Activated CD4-positive, alpha-beta memory T cell treated with anti-CD3 and anti-CD28 coated beads, Interleukin-2, amount 10 ng/mL, durations not matched to agents 7 days and 5 days (primary cell): ENCODE measurements at regions of chr14 and their contacts with region 1.

Region 1: DNA sequence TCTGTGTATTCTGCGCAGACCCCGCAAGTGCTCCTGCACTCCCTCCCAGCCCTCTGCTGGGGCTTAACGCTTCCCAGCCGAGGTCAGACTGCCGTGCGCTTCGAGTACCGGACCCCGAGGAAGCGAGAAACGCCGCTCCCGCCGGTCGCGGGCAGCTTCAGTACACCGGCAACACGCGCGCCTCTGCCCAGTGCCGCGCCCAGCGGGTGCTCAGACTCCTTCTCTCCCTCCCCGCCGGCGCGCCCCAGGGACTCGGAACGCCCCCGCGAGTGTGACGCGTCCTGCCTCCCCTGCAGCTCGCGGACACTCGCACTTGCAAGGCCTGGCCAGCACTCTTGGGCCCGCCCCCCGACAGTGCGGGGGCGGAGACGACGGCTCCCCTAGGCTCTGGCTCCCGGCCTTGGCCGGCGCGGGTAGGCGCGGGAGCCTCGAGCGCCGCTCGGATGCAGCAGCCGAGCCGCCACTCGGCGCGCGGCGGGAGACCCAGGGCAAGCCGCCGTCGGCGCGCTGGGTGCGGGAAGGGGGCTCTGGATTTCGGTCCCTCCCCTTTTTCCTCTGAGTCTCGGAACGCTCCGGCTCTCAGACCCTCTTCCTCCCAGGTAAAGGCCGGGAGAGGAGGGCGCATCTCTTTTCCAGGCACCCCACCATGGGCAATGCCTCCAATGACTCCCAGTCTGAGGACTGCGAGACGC is at the start of gene PTGER2:
- DNase-seq: peak; percentile 93
- H3K4me3 Mint-ChIP-seq: peak within 1 kb of the TSS; percentile 92
- H3K27ac Mint-ChIP-seq: peak within 1 kb of the TSS; percentile 97
- H3K4me1 Mint-ChIP-seq: peaks cover 63% of the 10 kb centered on the region
- H3K27me3 Mint-ChIP-seq: peaks cover 5% of the 10 kb centered on the region
- total RNA-seq, gene PTGER2: 108 to 112 TPM

Region 2: GRCh38 chr14:51860164-51860824 is 453.8 kb before region 1 on chr14 and contains the start of gene GNG2:
- CTCF ChIA-PET with region 1: no interaction called
- POLR2A ChIA-PET with region 1: interaction called, 17 read pairs
- DNase-seq: peak; percentile 90
- H3K4me3 Mint-ChIP-seq: peak within 1 kb of the TSS; percentile 84
- H3K27ac Mint-ChIP-seq: peak within 1 kb of the TSS; percentile 94
- H3K4me1 Mint-ChIP-seq: peaks cover 48% of the 10 kb centered on the region
- H3K27me3 Mint-ChIP-seq: no peaks in the 10 kb centered on the region
- total RNA-seq, gene GNG2: 296 to 304 TPM

Region 3: DNA sequence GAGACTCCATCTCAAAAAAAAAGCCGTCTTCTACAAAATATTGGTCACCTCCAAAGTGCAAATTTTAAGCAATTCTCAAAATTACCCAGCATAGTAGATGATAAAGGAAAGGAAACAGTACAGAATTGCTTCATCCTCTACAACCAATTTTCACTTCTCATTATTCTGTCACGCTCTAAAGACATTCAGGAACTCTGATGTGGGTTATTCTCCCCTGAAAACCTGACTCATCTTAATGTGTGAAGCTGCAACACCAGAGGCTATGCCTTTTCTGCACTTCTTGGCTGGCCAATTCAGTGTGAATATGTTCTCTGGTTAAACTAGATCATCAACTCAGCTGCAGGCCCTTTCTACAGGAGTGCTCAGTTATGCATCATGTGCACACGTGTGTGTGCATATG is 11.1 kb after region 1 on chr14:
- CTCF ChIA-PET with region 1: interaction called, 11 read pairs
- POLR2A ChIA-PET with region 1: interaction called, 121 read pairs
- DNase-seq: peak; percentile 47
- H3K4me3 Mint-ChIP-seq: peak overlapping the region; percentile 46
- H3K27ac Mint-ChIP-seq: peak overlapping the region; percentile 86
- H3K4me1 Mint-ChIP-seq: peaks cover 91% of the 10 kb centered on the region
- H3K27me3 Mint-ChIP-seq: peaks cover 2% of the 10 kb centered on the region

Region 4: GRCh38 chr14:52351233-52352060 is 37.4 kb after region 1 on chr14:
- CTCF ChIA-PET with region 1: interaction called, 28 read pairs
- POLR2A ChIA-PET with region 1: interaction called, 254 read pairs
- DNase-seq: peak; percentile 39
- H3K4me3 Mint-ChIP-seq: peak overlapping the region; percentile 72
- H3K27ac Mint-ChIP-seq: peak overlapping the region; percentile 95
- H3K4me1 Mint-ChIP-seq: peaks cover 74% of the 10 kb centered on the region
- H3K27me3 Mint-ChIP-seq: peaks cover 4% of the 10 kb centered on the region

Region 5: GRCh38 chr14:52413729-52414408 is 99.8 kb after region 1 on chr14:
- CTCF ChIA-PET with region 1: interaction called, 3 read pairs
- POLR2A ChIA-PET with region 1: interaction called, 11 read pairs
- DNase-seq: no peak
- H3K4me3 Mint-ChIP-seq: peak overlapping the region; percentile 50
- H3K27ac Mint-ChIP-seq: peak overlapping the region; percentile 75
- H3K4me1 Mint-ChIP-seq: peaks cover 50% of the 10 kb centered on the region
- H3K27me3 Mint-ChIP-seq: no peaks in the 10 kb centered on the region